ENCODE measurements at regions of chr6 and their contacts with region 1.

Region 1: GRCh38 chr6:6547110-6547879 is 41.2 kb upstream of the LY86 start:
- DNase-seq: peak; percentile 83
- H3K4me3 ChIP-seq: peak overlapping the region; percentile 27 to 50; a peak in 2 of 4 replicates
- H3K27ac ChIP-seq: no peak overlapping the region
- H3K4me1 ChIP-seq: peaks cover 0 to 2% of the 10 kb centered on the region in 2 experiments; a peak in 1 of 4 replicates
- H3K27me3 ChIP-seq: no peaks in the 10 kb centered on the region; the same call in 1 of the 2 replicates
- CTCF ChIP-seq: peak; percentile 82
- EP300 ChIP-seq: no peak
- RAD21 ChIP-seq: peak; percentile 85

Region 2: DNA sequence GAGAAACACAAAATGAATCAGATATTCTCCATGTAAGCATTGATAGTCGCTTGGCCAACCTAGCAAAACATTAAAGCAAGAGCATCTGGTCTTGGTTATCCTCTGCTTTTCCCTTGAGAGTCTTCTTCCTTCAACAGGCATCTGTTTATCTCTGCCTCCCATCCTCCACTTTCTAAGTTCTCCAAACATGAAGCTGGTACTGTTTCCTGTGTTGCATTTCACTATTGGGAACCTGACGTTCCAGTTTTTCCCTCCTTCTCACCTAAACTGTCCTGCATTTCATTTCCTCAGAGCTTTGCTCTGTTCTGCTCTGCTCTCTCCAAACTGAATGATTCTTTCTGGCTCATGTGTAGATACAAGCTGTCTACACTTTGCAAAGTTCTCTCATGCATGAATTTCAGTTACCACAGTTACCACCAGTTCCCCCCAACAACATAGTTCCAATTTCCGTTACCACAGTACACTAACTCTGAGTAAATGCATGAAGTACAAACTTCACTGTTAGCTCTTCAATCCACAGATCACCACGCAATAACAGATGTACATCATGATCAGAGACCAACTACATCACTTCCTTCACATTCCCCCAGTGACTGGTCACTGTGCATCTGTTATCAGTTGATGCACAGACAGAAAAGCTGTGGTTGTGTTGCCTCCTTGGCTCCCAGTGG is 140.1 kb before region 1 on chr6:
- CTCF ChIA-PET with region 1: no interaction called
- POLR2A ChIA-PET with region 1: no interaction called
- DNase-seq: no peak
- H3K4me3 ChIP-seq: no peak overlapping the region
- H3K27ac ChIP-seq: no peak overlapping the region
- H3K4me1 ChIP-seq: no peaks in the 10 kb centered on the region
- H3K27me3 ChIP-seq: no peaks in the 10 kb centered on the region
- CTCF ChIP-seq: no peak
- EP300 ChIP-seq: no peak
- RAD21 ChIP-seq: no peak

Region 3: GRCh38 chr6:6486595-6486994 is 60.7 kb before region 1 on chr6:
- CTCF ChIA-PET with region 1: no interaction called
- POLR2A ChIA-PET with region 1: no interaction called
- DNase-seq: no peak
- H3K4me3 ChIP-seq: no peak overlapping the region
- H3K27ac ChIP-seq: no peak overlapping the region
- H3K4me1 ChIP-seq: no peaks in the 10 kb centered on the region
- H3K27me3 ChIP-seq: no peaks in the 10 kb centered on the region
- CTCF ChIP-seq: no peak
- EP300 ChIP-seq: no peak
- RAD21 ChIP-seq: no peak

Region 4: GRCh38 chr6:6533176-6533575 is 14.1 kb before region 1 on chr6:
- CTCF ChIA-PET with region 1: interaction called, 32 read pairs
- POLR2A ChIA-PET with region 1: no interaction called
- DNase-seq: no peak
- H3K4me3 ChIP-seq: no peak overlapping the region
- H3K27ac ChIP-seq: no peak overlapping the region
- H3K4me1 ChIP-seq: no peaks in the 10 kb centered on the region; a peak in 1 of 4 replicates
- H3K27me3 ChIP-seq: no peaks in the 10 kb centered on the region
- CTCF ChIP-seq: no peak
- EP300 ChIP-seq: no peak
- RAD21 ChIP-seq: no peak

Region 5: GRCh38 chr6:6736791-6737654 is 189.7 kb after region 1 on chr6:
- CTCF ChIA-PET with region 1: no interaction called
- POLR2A ChIA-PET with region 1: no interaction called
- DNase-seq: peak; percentile 59
- H3K4me3 ChIP-seq: no peak overlapping the region
- H3K27ac ChIP-seq: no peak overlapping the region
- H3K4me1 ChIP-seq: no peaks in the 10 kb centered on the region; a peak in 1 of 4 replicates
- H3K27me3 ChIP-seq: no peaks in the 10 kb centered on the region
- CTCF ChIP-seq: no peak
- EP300 ChIP-seq: no peak
- RAD21 ChIP-seq: no peak

Region 6: DNA sequence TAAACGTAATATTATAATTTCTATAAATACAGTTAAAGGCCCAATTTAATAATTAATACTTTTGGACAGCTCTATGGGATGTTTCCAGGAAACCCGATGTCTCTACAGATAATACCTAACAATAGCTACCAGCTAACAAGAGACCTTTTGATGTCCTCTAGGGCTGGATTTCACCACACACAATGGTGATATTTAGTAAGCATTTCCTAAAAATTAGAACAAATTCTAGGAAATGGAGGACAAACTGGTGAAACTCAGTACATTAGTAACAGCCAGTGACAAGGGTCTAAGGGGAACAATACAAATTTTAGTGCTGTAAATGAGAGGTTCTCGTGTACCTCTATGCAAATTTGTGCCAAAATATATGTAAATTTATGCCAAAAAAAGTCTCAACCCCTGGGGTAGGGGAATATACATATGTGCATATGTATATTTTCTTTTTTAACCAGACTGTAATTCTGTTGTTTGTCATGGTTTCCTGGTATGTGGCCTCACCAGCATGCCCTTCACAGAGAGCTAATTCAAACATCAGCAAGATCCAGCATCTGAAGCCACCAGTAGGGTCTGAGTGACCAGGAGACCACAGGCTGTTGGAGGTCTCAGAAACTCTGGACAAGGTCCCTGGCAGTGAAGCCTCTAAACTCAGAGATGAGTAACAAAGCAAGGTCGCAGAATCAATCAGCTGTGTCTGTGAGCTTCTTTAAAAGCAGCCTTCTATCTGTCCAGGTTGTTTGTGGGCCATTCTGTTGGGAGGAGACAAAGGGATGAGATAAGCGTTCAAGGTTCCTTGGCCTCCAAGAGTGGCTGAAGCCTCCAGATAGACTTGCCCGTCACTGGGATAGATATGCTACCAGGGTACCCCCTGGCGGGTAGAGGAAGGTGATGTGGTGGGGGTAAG is 325.4 kb after region 1 on chr6:
- CTCF ChIA-PET with region 1: no interaction called
- POLR2A ChIA-PET with region 1: no interaction called
- DNase-seq: no peak
- H3K4me3 ChIP-seq: no peak overlapping the region
- H3K27ac ChIP-seq: no peak overlapping the region
- H3K4me1 ChIP-seq: no peaks in the 10 kb centered on the region
- H3K27me3 ChIP-seq: no peaks in the 10 kb centered on the region
- CTCF ChIP-seq: no peak
- EP300 ChIP-seq: no peak
- RAD21 ChIP-seq: no peak